Ovary (tissue), 10 donors: ENCODE measurements at regions of chr16 and their contacts with region 1.

Region 1: DNA sequence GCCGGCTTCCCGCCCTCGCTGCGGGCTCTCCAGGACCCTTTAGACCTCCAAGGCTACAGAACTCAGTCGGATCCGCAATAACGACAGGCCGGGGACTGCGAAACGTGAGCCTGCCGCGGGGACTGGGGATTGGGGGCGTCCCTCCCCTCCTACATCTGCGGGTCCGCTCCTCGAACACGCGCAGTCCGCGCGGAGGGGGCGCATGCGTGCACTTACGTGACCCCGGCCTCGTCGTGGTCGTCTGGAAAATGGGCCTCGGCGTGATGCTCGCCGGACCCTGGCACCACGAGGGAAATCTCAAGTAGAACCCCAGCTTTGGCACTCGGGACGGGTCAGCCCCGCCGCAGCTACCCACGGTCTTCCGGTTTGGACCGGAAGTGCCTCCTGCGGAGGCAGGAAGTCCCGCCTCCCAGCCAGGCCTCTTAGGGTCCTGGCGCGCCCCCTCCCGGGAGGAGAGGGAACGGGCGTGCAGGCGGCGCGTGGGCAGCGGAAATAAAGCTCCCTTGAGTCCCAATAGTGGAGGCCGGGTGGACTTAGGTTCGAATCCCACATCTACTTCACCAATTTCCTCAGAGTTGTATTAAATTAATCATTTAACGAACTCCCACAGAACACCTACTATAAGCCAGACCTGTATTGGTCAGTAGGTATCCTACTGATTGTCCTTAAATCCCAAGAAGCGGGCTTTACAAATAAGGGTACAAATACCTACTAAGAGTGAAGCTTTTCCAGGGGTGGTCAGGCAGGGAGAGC is at the start of gene TAF1C:
- DNase-seq: peak; percentile 87 to 96 (median 93)
- H3K4me3 ChIP-seq: peak within 1 kb of the TSS; percentile 82
- H3K27ac ChIP-seq: peak within 1 kb of the TSS; percentile 36 to 53
- H3K4me1 ChIP-seq: peaks cover 9% of the 10 kb centered on the region
- H3K27me3 ChIP-seq: no peaks in the 10 kb centered on the region
- CTCF ChIP-seq: peak; percentile 95 to 98 (median 97)
- EP300 ChIP-seq: no peak
- POLR2A ChIP-seq: peak; percentile 24
- total RNA-seq, gene TAF1C: 39.7 to 89.0 (median 58.4) TPM

Region 2: GRCh38 chr16:84084570-84085270 is 102.1 kb before region 1 on chr16:
- intact Hi-C with region 1: loop called in 3 of 4 experiments (anchors 5 to 10 kb)
- DNase-seq: peak; percentile 48 to 65 (median 56)
- H3K4me3 ChIP-seq: no peak overlapping the region
- H3K27ac ChIP-seq: no peak overlapping the region
- H3K4me1 ChIP-seq: no peaks in the 10 kb centered on the region
- H3K27me3 ChIP-seq: no peaks in the 10 kb centered on the region
- CTCF ChIP-seq: peak; percentile 9 to 45 (median 33)
- EP300 ChIP-seq: no peak
- POLR2A ChIP-seq: no peak

Region 3: DNA sequence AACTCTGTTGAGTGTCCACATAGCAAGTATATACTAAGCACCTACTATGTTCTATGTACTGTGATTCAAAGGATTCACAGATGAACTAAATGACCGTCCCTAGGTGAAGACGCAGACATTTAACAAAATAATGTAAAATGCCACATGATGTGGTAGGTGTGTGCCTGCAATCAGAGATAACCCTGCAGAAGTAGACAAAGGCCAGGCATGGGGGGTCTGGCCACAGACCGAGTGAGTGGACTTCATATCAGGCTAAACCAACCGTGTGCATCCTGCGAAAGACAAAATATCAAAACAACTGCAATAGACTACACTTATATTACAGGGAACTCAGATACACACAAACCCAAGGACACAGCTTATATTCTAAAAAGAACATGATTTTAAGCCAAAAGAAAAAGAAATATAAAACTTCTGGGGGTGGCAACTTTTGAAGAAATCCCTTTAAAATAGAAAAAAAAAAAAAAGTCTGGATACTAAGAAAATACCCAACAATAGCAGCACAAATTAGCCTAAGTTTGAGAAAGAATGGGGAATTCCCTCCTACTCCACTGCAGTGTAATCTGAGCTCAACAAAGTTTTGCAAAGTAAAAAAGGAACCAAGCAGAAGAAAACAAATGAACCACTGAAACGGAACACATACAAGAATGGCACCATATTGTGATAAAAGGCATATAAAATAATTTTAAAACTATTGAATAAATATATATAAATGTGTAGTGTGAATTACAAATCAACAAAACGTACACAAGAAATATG is 54.2 kb before region 1 on chr16:
- intact Hi-C with region 1: no loop called
- DNase-seq: no peak
- H3K4me3 ChIP-seq: no peak overlapping the region
- H3K27ac ChIP-seq: no peak overlapping the region
- H3K4me1 ChIP-seq: no peaks in the 10 kb centered on the region
- H3K27me3 ChIP-seq: no peaks in the 10 kb centered on the region
- CTCF ChIP-seq: no peak
- EP300 ChIP-seq: no peak
- POLR2A ChIP-seq: no peak

Region 4: DNA sequence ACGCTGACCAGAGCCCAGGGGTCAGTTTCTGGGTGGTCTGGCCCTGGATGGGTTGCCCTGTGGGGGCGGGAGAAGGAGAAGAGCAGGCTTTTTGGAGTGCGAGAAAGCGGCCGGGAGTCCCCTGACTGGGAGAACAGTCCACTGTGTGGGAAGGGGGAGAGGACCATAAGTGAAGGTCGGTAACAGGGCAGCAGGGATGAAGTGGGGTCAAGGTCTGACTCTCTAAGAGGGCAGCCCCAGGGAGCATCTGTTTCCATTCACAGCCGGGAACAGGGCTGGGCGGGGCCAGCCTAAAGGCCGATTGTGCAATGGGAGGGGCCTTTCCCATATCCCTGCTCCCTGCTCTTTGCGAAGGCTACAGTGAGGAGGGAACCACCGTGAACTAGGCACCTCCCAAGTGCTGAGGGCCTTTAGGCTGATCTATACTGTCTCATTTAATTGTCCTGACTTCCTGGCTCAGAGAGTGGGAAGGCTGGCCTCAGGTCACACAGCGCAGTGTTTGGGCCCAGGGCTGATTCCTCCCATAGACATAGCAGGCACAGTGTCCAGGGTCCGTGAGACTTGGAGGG is 97.4 kb after region 1 on chr16:
- intact Hi-C with region 1: no loop called
- DNase-seq: peak; percentile 83 to 90 (median 88)
- H3K4me3 ChIP-seq: no peak overlapping the region
- H3K27ac ChIP-seq: peak overlapping the region; percentile 0 to 68
- H3K4me1 ChIP-seq: peaks cover 17% of the 10 kb centered on the region
- H3K27me3 ChIP-seq: no peaks in the 10 kb centered on the region
- CTCF ChIP-seq: no peak
- EP300 ChIP-seq: no peak
- POLR2A ChIP-seq: no peak

Region 5: GRCh38 chr16:84484579-84485254 is 297.9 kb after region 1 on chr16:
- intact Hi-C with region 1: loop called in 1 of 4 experiments (anchors 5 kb)
- DNase-seq: peak; percentile 60 to 84 (median 80)
- H3K4me3 ChIP-seq: no peak overlapping the region
- H3K27ac ChIP-seq: no peak overlapping the region
- H3K4me1 ChIP-seq: no peaks in the 10 kb centered on the region
- H3K27me3 ChIP-seq: no peaks in the 10 kb centered on the region
- CTCF ChIP-seq: peak; percentile 35 to 83 (median 79)
- EP300 ChIP-seq: no peak
- POLR2A ChIP-seq: no peak

Region 6: GRCh38 chr16:84699712-84700445 is 513.0 kb after region 1 on chr16 and contains the start of gene USP10:
- intact Hi-C with region 1: no loop called
- DNase-seq: peak; percentile 71 to 88 (median 81)
- H3K4me3 ChIP-seq: peak within 1 kb of the TSS; percentile 85
- H3K27ac ChIP-seq: peak within 1 kb of the TSS; percentile 76 to 81
- H3K4me1 ChIP-seq: peaks cover 5% of the 10 kb centered on the region
- H3K27me3 ChIP-seq: no peaks in the 10 kb centered on the region
- CTCF ChIP-seq: no peak
- EP300 ChIP-seq: no peak
- POLR2A ChIP-seq: peak; percentile 54
- total RNA-seq, gene USP10: 41.1 to 83.6 (median 71.4) TPM